ENCODE measurements at regions of chr6 and their contacts with region 1.

Region 1: DNA sequence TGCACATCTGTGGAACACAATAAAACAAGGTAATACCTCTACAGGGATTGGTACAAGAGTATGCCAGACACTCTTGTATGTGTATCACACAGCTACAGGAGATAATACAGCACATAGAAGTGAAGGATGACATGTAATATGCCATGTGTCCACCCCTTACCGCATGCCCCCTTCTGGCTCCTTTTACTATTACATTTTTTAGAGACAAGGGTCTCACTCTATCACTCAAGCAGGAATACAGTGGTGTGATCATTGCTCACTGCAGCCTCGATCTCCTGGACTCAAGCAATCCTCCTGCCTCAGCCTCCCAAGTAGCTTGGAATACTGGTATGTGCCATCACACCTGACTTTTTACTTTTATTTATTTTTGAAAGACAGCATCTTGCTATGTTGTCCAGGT is 4.2 kb upstream of the NCR3 start:
- DNase-seq: no peak

Region 2: DNA sequence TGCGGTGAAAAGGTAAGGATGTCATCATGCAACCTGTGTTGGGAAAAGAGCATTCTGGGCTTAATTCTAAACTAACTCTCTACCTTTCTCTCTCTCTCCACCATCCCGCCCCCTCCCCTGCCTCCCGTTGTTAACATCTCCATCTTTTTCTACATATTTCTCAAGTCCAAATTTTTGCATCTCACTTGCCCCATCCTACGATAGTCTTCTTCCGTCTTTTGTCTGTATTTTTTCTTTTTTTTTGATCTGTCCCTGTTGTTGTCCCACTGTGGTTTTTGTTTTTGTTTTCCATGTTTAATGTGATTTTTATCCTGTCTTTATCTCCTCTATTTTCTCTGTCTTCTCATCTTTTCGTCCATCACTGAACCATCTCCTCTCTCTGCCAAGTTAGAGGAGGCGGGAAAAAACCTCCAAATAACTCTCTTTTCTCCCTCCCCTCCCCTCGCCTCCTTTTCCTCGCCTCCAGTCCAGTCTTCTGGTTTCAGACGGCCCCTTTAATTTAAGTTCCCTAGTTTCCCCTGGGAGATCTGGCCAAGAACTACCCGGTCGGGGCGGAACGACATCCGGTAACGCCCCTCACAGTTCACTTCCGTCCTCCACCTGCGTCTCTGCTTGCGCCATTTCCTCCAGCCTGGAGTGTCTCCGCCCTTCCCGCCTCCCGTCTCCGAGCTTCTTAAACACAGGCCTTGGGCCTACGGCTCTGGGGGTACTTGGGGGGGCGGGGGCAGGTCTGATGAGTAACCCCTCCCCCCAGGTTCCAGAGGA is 49.9 kb before region 1 on chr6 and contains the start of gene NFKBIL1:
- CTCF ChIA-PET with region 1: interaction called, 61 read pairs
- POLR2A ChIA-PET with region 1: interaction called, 91 read pairs
- DNase-seq: peak; percentile 94

Region 3: GRCh38 chr6:31580807-31581433 is 16.1 kb before region 1 on chr6:
- CTCF ChIA-PET with region 1: interaction called, 149 read pairs
- POLR2A ChIA-PET with region 1: interaction called, 23 read pairs
- DNase-seq: peak; percentile 96

Region 4: DNA sequence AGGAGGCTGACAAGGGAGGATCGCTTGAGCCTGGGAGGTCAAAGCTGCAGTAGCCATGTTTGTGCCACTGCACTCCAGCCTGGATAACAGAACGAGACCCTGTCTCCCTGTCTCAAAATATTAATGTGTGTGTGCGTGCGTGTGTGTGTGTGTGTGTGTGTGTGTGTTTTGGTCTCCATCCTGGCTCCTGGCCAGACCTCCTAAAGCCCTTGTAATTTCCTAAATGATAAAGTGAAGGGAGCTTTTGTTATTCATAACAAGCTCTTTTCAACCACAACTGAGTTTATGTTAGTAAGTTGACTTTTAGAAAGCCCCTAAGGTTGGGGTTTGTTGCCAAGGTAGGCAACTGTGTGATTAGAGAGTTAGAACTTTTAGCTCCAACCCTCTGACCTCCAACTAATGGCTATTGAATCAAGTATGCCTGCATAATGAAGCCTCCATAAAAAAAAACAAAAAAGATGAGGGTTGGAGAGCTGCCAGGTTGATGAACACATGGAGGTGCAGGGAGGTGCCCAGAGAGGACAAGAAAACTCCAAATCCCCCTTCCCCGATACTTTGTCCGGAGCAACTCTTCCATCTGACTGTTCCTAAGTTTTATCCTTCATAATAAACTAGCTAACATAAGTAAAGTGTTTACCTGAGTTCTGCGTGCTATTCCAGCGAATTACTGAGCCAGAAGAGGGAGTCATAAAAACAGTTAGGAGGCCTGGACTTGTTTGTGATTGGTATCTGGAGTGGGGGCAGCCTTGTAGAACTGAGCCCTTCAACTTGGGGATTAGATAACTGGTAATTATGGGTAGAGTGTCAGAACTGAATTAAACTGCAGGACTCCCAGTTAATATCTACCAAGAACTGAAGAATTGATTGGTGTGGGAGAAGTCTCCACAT is 12.8 kb after region 1 on chr6:
- CTCF ChIA-PET with region 1: interaction called, 13 read pairs
- POLR2A ChIA-PET with region 1: no interaction called
- DNase-seq: no peak